Activated T-helper 2 cell treated with anti-CD3 and anti-CD28 coated beads, Interferon-gamma antibody, Interleukin-2, Interleukin-4, amounts not matched to agents 10 μg/mL and 5 μg/mL and 100 μg/mL, durations not matched to agents 14 hours and 24 hours and 36 hours (primary cell): ENCODE measurements at regions of chr6 and their contacts with region 1.

Region 1: DNA sequence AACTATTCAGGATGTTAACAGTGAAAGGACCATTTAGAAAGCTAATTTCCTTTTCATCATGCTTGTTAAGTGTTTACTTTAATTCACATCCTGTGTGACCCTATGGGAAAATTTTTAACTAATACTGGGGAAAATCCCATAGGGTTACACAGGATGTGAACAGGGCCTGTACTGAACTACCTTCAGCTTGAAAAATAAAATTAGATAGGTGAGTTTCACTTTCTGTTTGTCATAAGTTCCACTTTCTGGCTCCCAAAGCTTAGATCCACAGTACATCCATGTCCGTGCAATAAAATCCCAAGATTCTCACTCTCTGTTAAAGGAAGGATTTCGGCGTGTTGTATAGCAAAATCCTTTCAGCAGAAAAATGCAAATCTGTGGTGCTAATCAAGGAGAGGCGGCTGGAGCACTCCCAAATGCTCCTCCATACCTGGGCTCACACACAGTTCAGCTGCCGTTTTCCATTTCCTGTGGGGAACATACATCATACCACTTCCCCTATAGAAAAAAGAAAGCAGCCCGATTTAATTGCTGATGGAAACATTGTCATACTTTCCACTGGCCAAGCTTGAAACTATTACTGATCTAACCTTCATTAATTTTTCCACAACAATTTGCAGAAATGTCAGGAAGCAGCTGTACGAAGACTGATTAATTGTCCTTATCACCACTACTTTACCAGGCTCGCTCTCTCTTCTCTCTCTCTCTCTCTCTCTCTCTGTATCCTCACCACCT is 125.2 kb downstream of the HIVEP2 start:
- DNase-seq: peak; percentile 55
- H3K4me3 Mint-ChIP-seq: peak overlapping the region; percentile 76
- H3K27ac Mint-ChIP-seq: peak overlapping the region; percentile 91
- H3K4me1 Mint-ChIP-seq: peaks cover 57% of the 10 kb centered on the region
- H3K27me3 Mint-ChIP-seq: no peaks in the 10 kb centered on the region

Region 2: DNA sequence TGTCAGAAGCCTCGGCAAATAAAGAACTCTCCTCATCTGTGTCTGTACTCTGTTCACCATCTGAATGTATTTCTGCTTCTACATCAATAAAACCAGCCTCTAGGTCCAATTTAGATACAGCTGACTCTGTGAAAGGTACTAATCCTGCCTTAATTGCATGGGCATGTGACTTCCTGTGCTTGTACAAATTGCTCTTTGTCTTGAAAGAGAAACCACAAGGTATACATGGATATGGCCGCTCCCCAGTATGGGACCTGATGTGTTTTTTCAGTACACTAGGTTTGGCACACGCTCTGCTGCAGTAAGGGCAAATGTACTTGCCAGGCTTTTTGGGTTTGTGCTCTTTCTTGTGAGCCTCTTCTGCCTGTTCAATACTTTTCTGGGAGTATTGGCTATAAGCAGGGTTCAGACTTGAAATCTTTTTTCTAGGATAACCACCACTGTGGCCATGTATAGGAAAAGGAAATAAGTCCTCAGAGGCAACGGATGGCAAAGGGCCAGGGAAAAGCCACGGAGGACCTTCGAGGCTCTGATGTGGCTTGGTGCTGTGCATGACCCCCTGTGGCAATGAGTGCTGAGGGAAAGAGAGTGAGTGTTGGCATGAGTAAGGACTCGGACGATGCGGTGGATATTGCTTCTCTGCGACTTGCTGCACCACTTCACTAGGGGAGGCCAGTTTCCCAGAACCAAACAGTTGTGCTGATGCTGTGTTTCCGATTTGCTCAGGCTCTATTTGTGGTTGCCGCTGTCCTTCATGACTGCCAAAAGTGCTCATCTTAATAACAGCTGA is 45.7 kb before region 1 on chr6:
- intact Hi-C with region 1: loop called (anchors 5 kb)
- DNase-seq: no peak
- H3K4me3 Mint-ChIP-seq: no peak overlapping the region
- H3K27ac Mint-ChIP-seq: no peak overlapping the region
- H3K4me1 Mint-ChIP-seq: peaks cover 23% of the 10 kb centered on the region
- H3K27me3 Mint-ChIP-seq: no peaks in the 10 kb centered on the region

Region 3: DNA sequence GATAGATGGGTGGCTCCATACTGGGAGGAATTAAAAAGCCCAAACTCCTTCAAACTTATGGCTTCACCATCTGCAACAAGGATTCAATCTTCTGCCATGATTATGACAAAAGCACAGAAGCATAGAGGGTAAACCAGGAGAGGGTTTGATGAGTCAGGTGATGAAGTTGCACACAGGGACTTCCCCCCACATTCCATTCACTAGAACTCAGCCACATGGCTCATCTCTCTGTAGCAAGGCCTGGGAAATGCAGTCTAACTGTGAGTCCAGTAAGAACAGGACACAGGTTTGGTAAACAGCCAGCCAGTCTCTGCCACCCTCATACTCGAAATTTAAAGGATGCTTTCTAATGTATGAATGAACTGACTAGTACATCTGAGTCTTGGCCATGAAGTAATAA is 17.6 kb before region 1 on chr6:
- intact Hi-C with region 1: loop called (anchors 2 kb)
- DNase-seq: no peak
- H3K4me3 Mint-ChIP-seq: no peak overlapping the region
- H3K27ac Mint-ChIP-seq: peak overlapping the region; percentile 56
- H3K4me1 Mint-ChIP-seq: peaks cover 41% of the 10 kb centered on the region
- H3K27me3 Mint-ChIP-seq: no peaks in the 10 kb centered on the region

Region 4: DNA sequence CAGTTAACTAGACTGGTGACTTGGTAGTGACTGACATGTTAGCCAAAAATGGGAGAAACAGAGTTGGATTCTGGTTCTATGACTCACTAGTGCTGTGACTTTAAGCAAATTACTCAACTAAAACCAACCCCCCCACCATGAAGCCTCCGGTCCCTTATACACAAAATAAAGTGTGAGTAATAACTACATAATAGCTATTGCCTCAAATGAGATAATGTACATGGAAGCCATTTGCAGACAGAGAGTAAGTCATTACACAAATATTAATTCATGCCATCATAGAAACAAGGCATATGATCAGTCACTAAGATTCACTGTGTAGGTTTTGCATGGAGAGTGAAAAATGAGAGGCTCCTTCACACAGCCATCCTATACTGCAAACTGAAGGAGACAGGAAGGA is 13.3 kb after region 1 on chr6:
- intact Hi-C with region 1: loop called (anchors 1 kb)
- DNase-seq: no peak
- H3K4me3 Mint-ChIP-seq: no peak overlapping the region
- H3K27ac Mint-ChIP-seq: no peak overlapping the region
- H3K4me1 Mint-ChIP-seq: peaks cover 36% of the 10 kb centered on the region
- H3K27me3 Mint-ChIP-seq: no peaks in the 10 kb centered on the region

Region 5: DNA sequence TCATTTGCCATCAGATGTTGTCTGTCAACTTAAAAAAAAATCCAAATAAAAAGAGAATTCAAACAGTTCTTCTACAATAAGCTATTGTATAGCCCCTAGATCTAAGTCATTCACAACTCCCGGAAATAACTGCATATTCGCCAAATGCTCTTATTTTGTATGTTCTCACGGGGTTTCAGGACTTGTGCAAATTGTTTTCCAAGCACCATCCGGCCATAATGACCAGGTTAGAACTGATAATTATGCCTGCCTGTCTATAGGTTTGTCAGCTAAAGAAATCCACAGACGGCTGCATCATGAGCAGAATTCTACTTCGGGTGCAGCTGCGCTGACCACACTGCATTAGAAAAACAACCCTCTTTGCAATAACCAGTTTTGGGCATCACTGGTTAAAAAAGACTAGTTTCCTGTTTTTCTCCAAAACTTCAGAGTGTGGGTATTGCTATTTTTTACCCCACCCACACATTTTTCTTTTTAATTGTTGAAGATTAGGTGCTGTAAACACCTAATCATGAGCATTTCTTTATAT is 37.5 kb after region 1 on chr6:
- intact Hi-C with region 1: loop called (anchors 5 kb)
- DNase-seq: no peak
- H3K4me3 Mint-ChIP-seq: peak overlapping the region; percentile 75
- H3K27ac Mint-ChIP-seq: peak overlapping the region; percentile 93
- H3K4me1 Mint-ChIP-seq: peaks cover 79% of the 10 kb centered on the region
- H3K27me3 Mint-ChIP-seq: no peaks in the 10 kb centered on the region

Region 6: GRCh38 chr6:142885182-142885867 is 65.6 kb after region 1 on chr6:
- intact Hi-C with region 1: loop called (anchors 1 kb)
- DNase-seq: peak; percentile 26
- H3K4me3 Mint-ChIP-seq: peak overlapping the region; percentile 92
- H3K27ac Mint-ChIP-seq: peak overlapping the region; percentile 99
- H3K4me1 Mint-ChIP-seq: peaks cover 65% of the 10 kb centered on the region
- H3K27me3 Mint-ChIP-seq: no peaks in the 10 kb centered on the region

Region 7: DNA sequence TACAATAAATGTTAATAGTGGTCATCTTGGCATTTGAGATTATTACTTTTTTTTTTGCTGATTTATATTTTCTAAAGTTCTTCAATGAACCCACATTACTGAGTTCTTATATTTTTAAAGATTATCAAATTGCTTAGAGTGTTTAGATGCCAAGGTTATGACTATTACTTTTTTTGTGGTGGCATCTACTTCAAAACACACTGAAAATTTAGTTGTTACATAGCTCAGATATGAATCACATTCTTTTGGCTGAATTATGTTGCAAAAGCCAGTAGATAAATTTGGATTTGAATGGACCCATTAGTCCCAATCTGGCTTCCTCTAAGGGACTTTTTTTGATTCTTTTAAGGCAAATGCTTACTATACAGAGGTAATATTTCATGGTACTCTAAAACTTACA is 1474.2 kb after region 1 on chr6:
- intact Hi-C with region 1: no loop called
- DNase-seq: no peak
- H3K4me3 Mint-ChIP-seq: no peak overlapping the region
- H3K27ac Mint-ChIP-seq: no peak overlapping the region
- H3K4me1 Mint-ChIP-seq: peaks cover 12% of the 10 kb centered on the region
- H3K27me3 Mint-ChIP-seq: peaks cover 9% of the 10 kb centered on the region